Esophagus muscularis mucosa (tissue), 4 donors: ENCODE measurements at regions of chr1 and their contacts with region 1.

Region 1: GRCh38 chr1:110495926-110496600 is 22.9 kb downstream of the KCNA10 start:
- DNase-seq: no peak
- H3K4me3 ChIP-seq: no peak overlapping the region
- H3K27ac ChIP-seq: no peak overlapping the region
- H3K4me1 ChIP-seq: peaks cover 0 to 19% (median 15%) of the 10 kb centered on the region in 4 donors
- H3K27me3 ChIP-seq: peaks cover 0 to 7% (median 0%) of the 10 kb centered on the region in 4 donors
- CTCF ChIP-seq: peak; percentile 87 to 94 (median 92)
- EP300 ChIP-seq: no peak
- POLR2A ChIP-seq: no peak

Region 2: DNA sequence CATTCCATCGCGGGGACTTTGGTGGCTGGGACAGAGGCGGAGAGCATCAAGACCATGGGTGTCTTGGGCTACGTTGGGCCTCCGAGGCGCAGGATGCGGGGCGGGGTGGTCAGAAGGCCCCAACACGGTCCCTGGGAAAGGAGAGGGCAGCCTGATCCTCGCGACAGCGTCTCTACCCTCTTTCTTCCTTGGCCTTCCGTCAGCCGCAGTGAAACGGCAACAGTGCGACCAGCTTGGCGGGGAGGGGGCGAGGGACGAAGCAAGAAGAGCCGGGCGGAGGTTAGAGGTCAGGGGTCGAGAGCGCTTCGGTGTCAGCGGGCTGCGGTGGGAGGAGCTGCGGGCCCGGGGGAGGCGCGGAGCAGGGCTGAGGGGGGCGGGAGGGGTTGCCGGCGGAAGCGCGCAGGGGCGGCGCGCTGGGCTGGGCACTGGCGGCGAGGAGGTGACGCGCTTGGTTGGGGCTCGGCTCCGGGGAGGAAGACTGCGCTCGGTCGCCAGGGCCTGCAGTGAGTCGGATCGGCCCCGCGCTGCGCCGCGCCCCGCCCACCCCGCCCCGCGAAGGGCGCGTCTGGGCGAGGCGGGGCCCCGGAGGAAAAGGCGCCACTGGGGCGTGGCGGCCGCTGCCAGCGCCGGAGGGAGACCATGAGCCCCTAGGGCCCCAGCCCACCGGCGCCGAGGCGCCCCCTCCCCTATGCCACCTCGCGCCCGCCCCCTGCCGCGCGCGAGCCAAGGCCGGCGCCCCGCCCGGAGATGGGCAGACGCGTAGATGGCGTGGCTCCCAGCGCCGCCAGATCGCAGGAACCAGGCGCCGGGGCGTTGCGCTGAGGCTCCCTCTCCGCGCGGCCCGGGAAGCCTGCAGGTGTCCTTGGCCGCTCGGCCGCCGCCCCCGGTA is 286.1 kb before region 1 on chr1 and contains the start of gene KCNC4:
- intact Hi-C with region 1: loop called (anchors 10 kb)
- DNase-seq: peak; percentile 96
- H3K4me3 ChIP-seq: peak within 1 kb of the TSS; percentile 65 to 93 (median 83)
- H3K27ac ChIP-seq: peak within 1 kb of the TSS; percentile 83 to 90 (median 85)
- H3K4me1 ChIP-seq: peaks cover 28 to 61% (median 54%) of the 10 kb centered on the region in 4 donors
- H3K27me3 ChIP-seq: peaks cover 0 to 6% (median 2%) of the 10 kb centered on the region in 4 donors
- CTCF ChIP-seq: peak in 1 of 3 experiments; percentile 9
- EP300 ChIP-seq: no peak
- POLR2A ChIP-seq: no peak
- total RNA-seq, gene KCNC4: 4.6 to 18.0 (median 9.7) TPM

Region 3: GRCh38 chr1:110312188-110313121 is 183.6 kb before region 1 on chr1:
- intact Hi-C with region 1: loop called (anchors 10 kb)
- DNase-seq: no peak
- H3K4me3 ChIP-seq: no peak overlapping the region
- H3K27ac ChIP-seq: no peak overlapping the region
- H3K4me1 ChIP-seq: peaks cover 7 to 15% (median 10%) of the 10 kb centered on the region in 4 donors
- H3K27me3 ChIP-seq: no peaks in the 10 kb centered on the region
- CTCF ChIP-seq: peak; percentile 90 to 93 (median 90)
- EP300 ChIP-seq: no peak
- POLR2A ChIP-seq: no peak

Region 4: GRCh38 chr1:110412576-110412975 is 83.5 kb before region 1 on chr1:
- intact Hi-C with region 1: loop called (anchors 5 kb)
- DNase-seq: no peak
- H3K4me3 ChIP-seq: no peak overlapping the region
- H3K27ac ChIP-seq: no peak overlapping the region
- H3K4me1 ChIP-seq: peaks cover 11 to 17% (median 14%) of the 10 kb centered on the region in 4 donors
- H3K27me3 ChIP-seq: no peaks in the 10 kb centered on the region
- CTCF ChIP-seq: peak; percentile 64 to 72 (median 67)
- EP300 ChIP-seq: no peak
- POLR2A ChIP-seq: no peak

Region 5: DNA sequence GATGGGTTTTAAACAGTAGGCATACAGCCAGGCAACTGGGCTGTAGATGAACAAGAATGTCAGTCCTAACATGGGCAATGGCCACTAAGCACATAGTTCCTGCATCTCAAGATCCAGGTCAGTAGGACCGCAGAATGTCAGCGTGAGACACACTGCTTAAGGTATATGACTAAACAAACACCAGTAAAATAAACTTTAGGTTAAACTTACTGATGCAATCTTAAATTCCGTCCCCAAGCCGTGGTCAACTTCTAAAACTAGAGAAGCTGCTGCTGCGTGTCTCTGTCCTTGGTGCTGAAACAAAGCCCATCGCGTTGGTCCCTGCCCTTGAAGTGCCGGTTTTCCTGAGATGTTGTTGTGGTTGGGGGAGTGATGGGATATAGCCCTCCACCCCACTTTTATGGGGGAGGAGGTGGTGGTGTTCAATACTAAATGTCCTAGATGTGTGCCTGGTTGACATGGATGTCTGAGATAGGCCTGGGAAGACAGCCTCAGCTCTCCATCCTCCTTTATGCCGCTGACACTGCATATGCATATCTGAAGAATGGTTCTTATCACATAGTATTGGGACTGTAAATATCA is 250.6 kb after region 1 on chr1:
- intact Hi-C with region 1: no loop called
- DNase-seq: peak; percentile 68
- H3K4me3 ChIP-seq: no peak overlapping the region
- H3K27ac ChIP-seq: no peak overlapping the region
- H3K4me1 ChIP-seq: peaks cover 0 to 15% (median 0%) of the 10 kb centered on the region in 4 donors
- H3K27me3 ChIP-seq: peaks cover 0 to 23% (median 0%) of the 10 kb centered on the region in 4 donors
- CTCF ChIP-seq: no peak
- EP300 ChIP-seq: no peak
- POLR2A ChIP-seq: no peak

Region 6: GRCh38 chr1:110948038-110948810 is 452.2 kb after region 1 on chr1:
- intact Hi-C with region 1: no loop called
- DNase-seq: no peak
- H3K4me3 ChIP-seq: no peak overlapping the region
- H3K27ac ChIP-seq: no peak overlapping the region
- H3K4me1 ChIP-seq: no peaks in the 10 kb centered on the region
- H3K27me3 ChIP-seq: no peaks in the 10 kb centered on the region
- CTCF ChIP-seq: no peak
- EP300 ChIP-seq: no peak
- POLR2A ChIP-seq: no peak